ENCODE measurements at regions of chr1 and their contacts with region 1.

Region 1: GRCh38 chr1:56831871-56832693 is 12.9 kb upstream of the FYB2 start:
- DNase-seq: peak; percentile 77
- H3K4me3 ChIP-seq: no peak overlapping the region
- CTCF ChIP-seq: peak; percentile 93

Region 2: GRCh38 chr1:56911098-56911938 is 79.2 kb after region 1 on chr1:
- in situ Hi-C with region 1: no loop called
- DNase-seq: no peak
- H3K4me3 ChIP-seq: no peak overlapping the region
- CTCF ChIP-seq: no peak

Region 3: GRCh38 chr1:57188168-57188567 is 356.1 kb after region 1 on chr1:
- in situ Hi-C with region 1: no loop called
- DNase-seq: no peak
- H3K4me3 ChIP-seq: no peak overlapping the region
- CTCF ChIP-seq: no peak

Region 4: DNA sequence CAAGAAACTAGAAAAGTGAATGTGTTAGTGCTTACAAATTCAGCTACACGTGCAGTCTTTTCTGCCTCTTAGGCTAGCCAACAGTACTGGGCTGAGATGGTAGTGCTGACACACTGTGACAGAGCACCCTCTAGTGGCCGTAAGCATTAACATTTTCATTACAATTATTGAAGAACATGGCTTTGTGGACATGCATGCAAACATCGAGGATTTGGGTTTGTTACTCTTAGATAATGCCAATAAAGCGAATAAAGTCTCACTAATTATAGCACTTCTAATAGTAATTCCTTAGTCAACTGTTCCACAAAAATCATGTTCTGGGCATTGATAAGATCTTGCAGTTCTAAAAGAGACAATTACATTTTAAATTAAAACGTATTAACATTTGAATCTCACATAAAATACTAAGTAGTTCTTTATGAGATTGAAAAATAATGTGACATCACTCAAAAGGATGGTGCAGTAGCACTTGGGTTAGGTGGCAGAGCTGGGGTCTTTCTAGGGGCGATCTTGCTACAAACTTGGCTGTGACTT is 1820.6 kb after region 1 on chr1:
- in situ Hi-C with region 1: loop called (anchors 25 kb)
- DNase-seq: peak; percentile 73
- H3K4me3 ChIP-seq: no peak overlapping the region
- CTCF ChIP-seq: peak; percentile 68

Measured in astrocyte of the cerebellum (primary cell).